Panc1 (cell line): ENCODE measurements at regions of chr22 and their contacts with region 1.

Region 1: DNA sequence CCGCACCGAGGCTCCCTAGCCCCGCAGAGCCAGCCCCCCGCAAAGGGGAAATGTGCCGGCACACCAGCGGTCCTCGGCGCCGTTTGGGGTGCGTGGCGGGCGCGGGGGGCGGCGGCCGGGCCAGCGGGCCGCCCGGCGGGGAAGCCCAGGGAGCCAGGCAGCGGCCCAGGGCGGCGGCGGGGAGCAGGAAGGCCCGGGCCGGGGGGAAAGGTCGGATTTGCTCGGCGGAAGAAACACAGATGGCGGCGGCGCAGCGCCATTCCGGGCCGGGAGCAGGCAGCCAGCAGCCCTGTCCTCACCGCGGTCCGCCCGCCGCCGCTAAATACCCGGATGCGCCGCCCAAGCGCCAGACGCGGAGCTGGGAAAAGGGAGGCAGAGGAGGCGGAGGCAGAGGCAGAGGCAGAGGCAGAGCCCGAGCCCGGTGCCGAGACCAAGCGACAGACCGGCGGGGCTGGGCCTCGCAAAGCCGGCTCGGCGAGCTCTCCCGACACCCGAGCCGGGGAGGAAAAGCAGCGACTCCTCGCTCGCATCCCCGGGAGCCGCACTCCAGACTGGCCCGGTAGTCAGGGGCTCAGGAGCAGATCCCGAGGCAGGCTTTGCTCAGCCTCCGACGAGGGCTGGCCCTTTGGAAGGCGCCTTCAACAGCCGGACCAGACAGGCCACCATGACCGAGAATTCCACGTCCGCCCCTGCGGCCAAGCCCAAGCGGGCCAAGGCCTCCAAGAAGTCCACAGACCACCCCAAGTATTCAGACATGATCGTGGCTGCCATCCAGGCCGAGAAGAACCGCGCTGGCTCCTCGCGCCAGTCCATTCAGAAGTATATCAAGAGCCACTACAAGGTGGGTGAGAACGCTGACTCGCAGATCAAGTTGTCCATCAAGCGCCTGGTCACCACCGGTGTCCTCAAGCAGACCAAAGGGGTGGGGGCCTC is 2.6 kb upstream of the GCAT start:
- DNase-seq: no peak
- ATAC-seq: peak; percentile 68
- H3K4me3 ChIP-seq: peak overlapping the region; percentile 65 to 75
- H3K27ac ChIP-seq: peak overlapping the region; percentile 82
- H3K4me1 ChIP-seq: peaks cover 11% of the 10 kb centered on the region
- H3K27me3 ChIP-seq: no peaks in the 10 kb centered on the region
- CTCF ChIP-seq: no peak

Region 2: DNA sequence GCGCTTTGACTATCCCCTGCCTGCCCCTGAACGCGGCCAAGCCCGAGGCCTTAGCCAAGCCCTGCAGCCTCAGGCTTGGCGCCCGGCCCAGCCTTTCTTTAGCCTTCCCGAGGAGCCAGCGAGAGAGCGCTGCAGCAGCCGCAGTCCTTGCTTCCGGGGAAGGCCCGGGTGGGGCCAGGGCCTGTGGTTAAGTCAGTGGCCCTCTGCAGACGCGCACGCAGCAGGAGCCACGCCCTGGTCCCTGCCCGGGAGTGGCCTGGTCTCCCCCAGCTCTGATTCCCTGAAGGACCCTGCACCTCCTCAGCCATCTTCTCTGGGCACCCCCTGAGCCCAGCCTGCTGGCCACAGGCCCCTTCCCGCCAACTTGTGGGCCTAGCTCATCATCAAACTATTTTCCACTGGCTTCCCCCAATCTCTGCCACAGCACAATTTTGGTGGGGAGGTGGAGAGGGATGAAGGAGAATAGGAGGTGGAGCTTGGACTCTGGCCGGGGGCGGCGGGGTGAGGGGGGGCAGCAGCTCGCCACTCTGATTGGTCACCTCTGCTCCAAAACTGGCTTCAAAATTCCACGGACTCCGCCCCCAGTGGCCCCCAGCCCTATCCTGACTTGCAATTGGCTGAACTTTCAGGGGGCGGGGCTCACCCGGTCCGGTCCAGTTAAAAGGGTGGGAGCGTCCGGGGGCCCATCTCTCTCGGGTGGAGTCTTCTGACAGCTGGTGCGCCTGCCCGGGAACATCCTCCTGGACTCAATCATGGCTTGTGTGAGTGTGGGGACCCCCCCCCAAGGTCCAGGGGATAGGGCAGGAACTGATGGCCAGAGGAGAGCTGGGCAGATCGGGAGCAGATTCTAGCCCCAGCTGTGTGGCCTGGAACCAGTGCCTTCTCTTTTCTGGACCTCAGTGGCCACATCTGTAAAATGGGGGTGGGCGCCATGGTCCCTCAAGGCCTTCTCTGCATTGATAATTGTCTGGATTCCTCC is 129.9 kb before region 1 on chr22 and contains the start of gene LGALS1:
- CTCF ChIA-PET with region 1: no interaction called
- POLR2A ChIA-PET with region 1: interaction called, 12 read pairs
- in situ Hi-C with region 1: no loop called
- intact Hi-C with region 1: no loop called
- DNase-seq: peak; percentile 69
- ATAC-seq: peak; percentile 86
- H3K4me3 ChIP-seq: peak within 1 kb of the TSS; percentile 70 to 84
- H3K27ac ChIP-seq: peak within 1 kb of the TSS; percentile 87
- H3K4me1 ChIP-seq: peaks cover 21% of the 10 kb centered on the region
- H3K27me3 ChIP-seq: no peaks in the 10 kb centered on the region
- CTCF ChIP-seq: no peak
- total RNA-seq, gene LGALS1: 1,518 TPM

Region 3: DNA sequence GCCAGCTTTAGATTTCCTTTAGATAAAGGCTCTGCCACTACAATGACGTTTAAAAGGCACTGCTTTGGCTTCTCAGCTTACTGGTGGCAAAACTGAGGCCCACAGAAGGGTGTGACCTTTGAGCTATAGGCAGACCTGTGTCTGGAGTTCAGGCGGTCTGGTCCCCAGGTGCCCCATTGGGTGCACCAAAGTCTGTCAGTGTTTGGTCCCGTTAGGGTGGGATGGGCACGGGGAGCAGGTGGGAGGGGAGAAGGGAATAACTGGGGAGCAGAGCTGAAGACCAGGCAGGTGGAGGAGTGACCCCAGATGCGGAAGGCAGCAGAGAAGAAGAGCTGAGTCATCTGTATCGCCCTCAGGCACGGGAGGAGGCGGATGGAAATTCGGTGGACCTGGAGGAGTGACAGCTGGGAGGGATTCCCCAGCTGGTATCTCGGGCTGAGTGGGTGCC is 42.7 kb before region 1 on chr22:
- CTCF ChIA-PET with region 1: no interaction called
- POLR2A ChIA-PET with region 1: no interaction called
- in situ Hi-C with region 1: no loop called
- intact Hi-C with region 1: no loop called
- DNase-seq: no peak
- ATAC-seq: no peak
- H3K4me3 ChIP-seq: no peak overlapping the region
- H3K27ac ChIP-seq: 0 out of 2 replicates have a peak overlapping the region, but pooled peaks have one; percentile 29
- H3K4me1 ChIP-seq: peaks cover 4% of the 10 kb centered on the region
- H3K27me3 ChIP-seq: no peaks in the 10 kb centered on the region
- CTCF ChIP-seq: no peak

Region 4: DNA sequence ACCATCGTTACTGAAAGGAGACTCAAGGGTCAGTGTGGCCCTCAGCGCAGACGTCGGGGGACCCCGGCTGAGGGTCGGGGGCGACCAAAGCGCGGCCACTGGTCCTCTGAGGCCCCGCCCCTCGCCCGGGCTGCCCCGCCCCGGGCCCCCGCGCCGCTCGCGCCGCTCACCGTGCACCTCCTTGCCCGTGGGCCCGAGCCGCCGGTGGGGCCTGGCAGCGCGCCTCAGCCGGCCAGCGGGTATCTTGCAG is 38.5 kb after region 1 on chr22:
- CTCF ChIA-PET with region 1: no interaction called
- POLR2A ChIA-PET with region 1: no interaction called
- in situ Hi-C with region 1: no loop called
- intact Hi-C with region 1: no loop called
- DNase-seq: no peak
- ATAC-seq: peak; percentile 77
- H3K4me3 ChIP-seq: peak overlapping the region; percentile 65 to 86
- H3K27ac ChIP-seq: peak overlapping the region; percentile 86
- H3K4me1 ChIP-seq: 0 out of 2 replicates have a peak, but pooled peaks cover 3% of the 10 kb centered on the region
- H3K27me3 ChIP-seq: no peaks in the 10 kb centered on the region
- CTCF ChIP-seq: no peak

Region 5: GRCh38 chr22:38172832-38173638 is 367.9 kb after region 1 on chr22:
- CTCF ChIA-PET with region 1: no interaction called
- POLR2A ChIA-PET with region 1: no interaction called
- in situ Hi-C with region 1: no loop called
- intact Hi-C with region 1: no loop called
- DNase-seq: no peak
- ATAC-seq: peak; percentile 47
- H3K4me3 ChIP-seq: no peak overlapping the region
- H3K27ac ChIP-seq: peak overlapping the region; percentile 57; the same call in 1 of the 2 replicates
- H3K4me1 ChIP-seq: peaks cover 23% of the 10 kb centered on the region
- H3K27me3 ChIP-seq: no peaks in the 10 kb centered on the region
- CTCF ChIP-seq: no peak